WTC11 (cell line): ENCODE measurements at regions of chr18 and their contacts with region 1.

Region 1: GRCh38 chr18:12990967-12991838 is at the start of gene CEP192:
- DNase-seq: peak; percentile 95
- ATAC-seq: peak; percentile 91
- H3K4me3 Mint-ChIP-seq: peak within 1 kb of the TSS; percentile 95
- H3K27ac Mint-ChIP-seq: peak within 1 kb of the TSS; percentile 96
- H3K4me1 Mint-ChIP-seq: peaks cover 13% of the 10 kb centered on the region
- H3K27me3 Mint-ChIP-seq: no peaks in the 10 kb centered on the region
- CTCF ChIP-seq: no peak
- total RNA-seq, gene CEP192: 24.3 to 26.8 TPM (median 25.4 TPM) in 3 replicates

Region 2: DNA sequence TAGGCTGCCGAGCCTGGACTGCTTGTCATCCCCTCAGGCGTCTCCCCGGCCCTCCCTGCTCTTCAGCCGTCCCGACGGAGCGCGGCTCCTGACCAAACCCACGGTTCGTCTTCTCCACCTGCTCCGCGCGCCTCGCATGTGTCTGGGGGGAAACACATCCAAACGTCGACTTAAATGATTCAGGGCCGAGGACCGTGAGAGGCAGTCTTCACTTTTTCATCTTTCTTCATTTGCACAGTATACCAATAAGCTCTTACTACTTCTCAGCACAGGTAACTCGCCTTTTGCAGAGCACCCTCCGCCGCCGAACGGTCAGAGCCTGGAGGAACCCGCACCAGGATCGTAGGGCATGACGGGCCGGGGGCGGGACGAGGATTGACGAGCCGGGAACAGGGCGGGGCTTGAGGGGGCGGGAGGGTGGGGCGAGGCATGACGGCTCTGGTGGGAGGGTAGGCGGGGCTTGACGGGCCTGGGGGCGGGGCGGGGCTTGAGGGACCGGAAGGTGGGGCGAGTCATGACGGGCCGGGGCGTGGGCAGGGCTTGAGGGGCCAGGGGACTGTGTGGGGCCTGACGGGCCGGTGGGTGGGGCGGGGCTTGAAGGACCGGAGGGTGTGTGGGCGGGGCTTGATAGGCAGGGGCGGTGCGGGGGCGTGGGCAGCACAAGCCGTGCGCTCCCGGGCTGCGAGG is 43.7 kb before region 1 on chr18 and contains the start of gene SEH1L:
- CTCF ChIA-PET with region 1: no interaction called
- POLR2A ChIA-PET with region 1: interaction called, 11 read pairs
- DNase-seq: peak; percentile 98
- ATAC-seq: peak; percentile 95
- H3K4me3 Mint-ChIP-seq: peak within 1 kb of the TSS; percentile 92
- H3K27ac Mint-ChIP-seq: peak within 1 kb of the TSS; percentile 98
- H3K4me1 Mint-ChIP-seq: peaks cover 21% of the 10 kb centered on the region
- H3K27me3 Mint-ChIP-seq: no peaks in the 10 kb centered on the region
- CTCF ChIP-seq: no peak
- total RNA-seq, gene SEH1L: 75.5 to 81.2 TPM (median 79.1 TPM) in 3 replicates

Region 3: DNA sequence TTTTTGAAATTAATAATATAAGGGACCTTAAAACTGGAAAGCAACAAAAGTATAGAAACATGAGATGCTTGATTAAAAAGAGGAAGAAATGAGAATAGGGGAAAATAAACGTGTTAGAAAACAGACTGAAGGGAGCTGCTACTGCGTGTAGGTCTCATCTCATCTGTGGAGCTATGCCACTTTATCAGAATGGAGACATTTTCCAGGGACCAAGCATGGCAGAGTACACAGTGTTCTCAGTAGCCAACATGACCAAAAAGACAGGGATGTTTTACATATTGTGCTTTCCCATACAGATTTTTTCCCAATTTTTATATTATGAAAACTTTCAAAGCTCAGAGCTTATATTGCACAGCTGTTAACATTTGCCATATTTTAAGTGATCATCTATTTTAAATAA is 23.0 kb after region 1 on chr18:
- CTCF ChIA-PET with region 1: no interaction called
- POLR2A ChIA-PET with region 1: no interaction called
- DNase-seq: no peak
- ATAC-seq: no peak
- H3K4me3 Mint-ChIP-seq: no peak overlapping the region
- H3K27ac Mint-ChIP-seq: no peak overlapping the region
- H3K4me1 Mint-ChIP-seq: no peaks in the 10 kb centered on the region
- H3K27me3 Mint-ChIP-seq: no peaks in the 10 kb centered on the region
- CTCF ChIP-seq: no peak

Region 4: DNA sequence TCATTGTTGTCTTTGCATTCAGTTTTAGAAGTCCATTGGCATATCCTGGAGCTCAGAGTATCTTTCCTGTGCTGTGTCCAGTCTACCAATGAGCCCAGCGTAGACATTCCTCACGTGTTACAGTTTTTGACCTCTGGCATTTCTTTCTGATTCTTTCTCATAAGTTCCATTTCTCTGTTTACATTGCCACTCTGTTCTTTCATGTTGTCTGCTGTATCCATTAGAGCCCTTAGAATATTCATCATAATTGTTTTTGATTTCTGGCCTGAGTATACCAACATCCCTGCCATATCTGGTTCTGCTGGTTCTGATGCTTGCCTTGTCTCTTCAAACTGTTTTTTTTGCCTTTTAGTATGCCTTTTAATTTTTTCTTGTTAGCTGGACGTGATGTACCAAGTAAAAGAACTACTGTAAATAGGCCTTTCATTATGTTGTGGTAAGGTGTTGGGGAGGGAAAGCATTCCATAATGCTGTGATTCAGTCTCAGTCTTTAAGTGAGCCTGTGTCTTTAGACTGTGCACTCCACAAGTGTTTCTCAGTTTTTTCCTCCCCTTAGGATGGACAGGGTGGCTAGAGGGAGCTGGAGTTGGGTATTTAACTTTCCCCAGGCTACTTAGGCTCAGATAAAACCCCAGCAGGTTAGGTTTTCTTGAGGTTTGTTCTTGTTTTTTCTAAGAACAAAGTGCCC is 35.5 kb after region 1 on chr18:
- CTCF ChIA-PET with region 1: no interaction called
- POLR2A ChIA-PET with region 1: no interaction called
- DNase-seq: no peak
- ATAC-seq: no peak
- H3K4me3 Mint-ChIP-seq: no peak overlapping the region
- H3K27ac Mint-ChIP-seq: no peak overlapping the region
- H3K4me1 Mint-ChIP-seq: no peaks in the 10 kb centered on the region
- H3K27me3 Mint-ChIP-seq: no peaks in the 10 kb centered on the region
- CTCF ChIP-seq: no peak

Region 5: GRCh38 chr18:13061630-13062189 is 70.5 kb after region 1 on chr18:
- CTCF ChIA-PET with region 1: no interaction called
- POLR2A ChIA-PET with region 1: no interaction called
- DNase-seq: no peak
- ATAC-seq: no peak
- H3K4me3 Mint-ChIP-seq: no peak overlapping the region
- H3K27ac Mint-ChIP-seq: 0 out of 2 replicates have a peak overlapping the region, but pooled peaks have one; percentile 47
- H3K4me1 Mint-ChIP-seq: peaks cover 14% of the 10 kb centered on the region
- H3K27me3 Mint-ChIP-seq: no peaks in the 10 kb centered on the region
- CTCF ChIP-seq: no peak

Region 6: GRCh38 chr18:13137670-13138419 is 146.6 kb after region 1 on chr18:
- CTCF ChIA-PET with region 1: no interaction called
- POLR2A ChIA-PET with region 1: no interaction called
- DNase-seq: no peak
- ATAC-seq: no peak
- H3K4me3 Mint-ChIP-seq: peak overlapping the region; percentile 62
- H3K27ac Mint-ChIP-seq: no peak overlapping the region
- H3K4me1 Mint-ChIP-seq: peaks cover 11% of the 10 kb centered on the region; the same call in 1 of the 2 replicates
- H3K27me3 Mint-ChIP-seq: peaks cover 47% of the 10 kb centered on the region
- CTCF ChIP-seq: no peak